Endothelial cell of umbilical vein (primary cell): ENCODE measurements at regions of chr3 and their contacts with region 1.

Region 1: GRCh38 chr3:147119989-147120388 is 286.4 kb downstream of the ZIC4 start:
- DNase-seq: peak; percentile 29
- H3K4me3 ChIP-seq: no peak overlapping the region
- H3K27ac ChIP-seq: no peak overlapping the region
- H3K4me1 ChIP-seq: no peaks in the 10 kb centered on the region
- H3K27me3 ChIP-seq: peaks cover 0 to 4% of the 10 kb centered on the region in 2 experiments
- CTCF ChIP-seq: peak in 1 of 2 donors; percentile 33
- POLR2A ChIP-seq: no peak

Region 2: DNA sequence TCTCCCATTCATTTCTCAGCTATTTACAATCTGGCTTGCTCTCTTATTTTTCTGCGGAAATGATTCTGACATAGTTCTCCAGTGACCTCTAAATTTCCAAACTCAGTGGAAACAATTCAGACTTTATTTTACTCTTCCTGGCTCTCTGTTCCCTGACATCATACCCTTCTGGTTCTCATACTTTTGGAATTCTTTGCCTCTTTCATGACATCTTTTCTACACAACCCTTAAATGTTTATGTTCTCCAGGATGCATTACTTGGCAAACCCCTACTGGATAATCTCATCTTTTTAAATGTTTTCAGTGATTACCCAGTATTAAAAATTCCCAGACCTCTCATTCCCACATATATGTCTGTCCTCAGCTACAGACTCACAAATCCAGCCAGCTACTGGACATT is 845.2 kb before region 1 on chr3:
- CTCF ChIA-PET with region 1: no interaction called
- POLR2A ChIA-PET with region 1: no interaction called
- dilution Hi-C with region 1: no loop called
- intact Hi-C with region 1: no loop called
- DNase-seq: peak; percentile 98
- H3K4me3 ChIP-seq: no peak overlapping the region
- H3K27ac ChIP-seq: peak overlapping the region; percentile 99
- H3K4me1 ChIP-seq: peaks cover 58% of the 10 kb centered on the region
- H3K27me3 ChIP-seq: no peaks in the 10 kb centered on the region
- CTCF ChIP-seq: no peak
- POLR2A ChIP-seq: peak; percentile 49

Region 3: DNA sequence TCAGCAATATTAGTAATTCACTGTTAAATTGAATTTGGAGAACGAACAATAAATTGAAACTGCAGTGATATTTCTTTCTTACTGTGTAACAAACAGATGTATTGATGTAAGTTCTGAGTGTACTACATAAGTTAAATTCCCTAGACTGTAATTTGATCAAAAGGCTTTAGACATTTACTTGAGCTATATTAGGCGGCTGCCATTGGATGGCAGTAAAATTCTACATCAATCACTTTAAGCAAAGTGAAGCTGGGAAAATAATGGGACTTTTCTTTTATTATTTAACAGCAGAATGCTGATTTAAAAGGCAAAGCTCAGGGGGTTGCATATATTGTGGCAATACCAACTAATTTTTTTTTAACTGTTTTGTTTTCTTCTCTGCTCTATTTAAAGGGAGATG is 302.3 kb before region 1 on chr3:
- CTCF ChIA-PET with region 1: interaction called, 15 read pairs
- POLR2A ChIA-PET with region 1: no interaction called
- dilution Hi-C with region 1: no loop called
- intact Hi-C with region 1: no loop called
- DNase-seq: peak; percentile 43
- H3K4me3 ChIP-seq: no peak overlapping the region
- H3K27ac ChIP-seq: no peak overlapping the region
- H3K4me1 ChIP-seq: no peaks in the 10 kb centered on the region
- H3K27me3 ChIP-seq: no peaks in the 10 kb centered on the region
- CTCF ChIP-seq: peak in 1 of 2 donors; percentile 31
- POLR2A ChIP-seq: no peak

Region 4: GRCh38 chr3:147130461-147130860 is 10.5 kb after region 1 on chr3:
- CTCF ChIA-PET with region 1: interaction called, 18 read pairs
- POLR2A ChIA-PET with region 1: no interaction called
- dilution Hi-C with region 1: no loop called
- intact Hi-C with region 1: no loop called
- DNase-seq: no peak
- H3K4me3 ChIP-seq: no peak overlapping the region
- H3K27ac ChIP-seq: no peak overlapping the region
- H3K4me1 ChIP-seq: no peaks in the 10 kb centered on the region
- H3K27me3 ChIP-seq: no peaks in the 10 kb centered on the region
- CTCF ChIP-seq: no peak
- POLR2A ChIP-seq: no peak

Region 5: GRCh38 chr3:147139341-147139740 is 19.4 kb after region 1 on chr3:
- CTCF ChIA-PET with region 1: interaction called, 11 read pairs
- POLR2A ChIA-PET with region 1: interaction called, 3 read pairs
- dilution Hi-C with region 1: no loop called
- intact Hi-C with region 1: no loop called
- DNase-seq: no peak
- H3K4me3 ChIP-seq: no peak overlapping the region
- H3K27ac ChIP-seq: no peak overlapping the region
- H3K4me1 ChIP-seq: peaks cover 8% of the 10 kb centered on the region
- H3K27me3 ChIP-seq: no peaks in the 10 kb centered on the region
- CTCF ChIP-seq: no peak
- POLR2A ChIP-seq: no peak

Region 6: GRCh38 chr3:147191795-147192385 is 71.9 kb after region 1 on chr3:
- CTCF ChIA-PET with region 1: interaction called, 69 read pairs
- POLR2A ChIA-PET with region 1: no interaction called
- dilution Hi-C with region 1: no loop called
- intact Hi-C with region 1: loop called (anchors 1 kb)
- DNase-seq: peak; percentile 82
- H3K4me3 ChIP-seq: no peak overlapping the region
- H3K27ac ChIP-seq: no peak overlapping the region
- H3K4me1 ChIP-seq: no peaks in the 10 kb centered on the region
- H3K27me3 ChIP-seq: no peaks in the 10 kb centered on the region
- CTCF ChIP-seq: peak; percentile 67 to 71
- POLR2A ChIP-seq: no peak

Region 7: GRCh38 chr3:147418808-147419701 is 299.1 kb after region 1 on chr3:
- CTCF ChIA-PET with region 1: no interaction called
- POLR2A ChIA-PET with region 1: no interaction called
- dilution Hi-C with region 1: no loop called
- intact Hi-C with region 1: loop called (anchors 10 kb)
- DNase-seq: no peak
- H3K4me3 ChIP-seq: no peak overlapping the region
- H3K27ac ChIP-seq: no peak overlapping the region
- H3K4me1 ChIP-seq: peaks cover 4% of the 10 kb centered on the region
- H3K27me3 ChIP-seq: peaks cover 91 to 100% of the 10 kb centered on the region in 2 experiments
- CTCF ChIP-seq: no peak
- POLR2A ChIP-seq: no peak